Activated naive CD4-positive, alpha-beta T cell treated with anti-CD3 and anti-CD28 coated beads for 36 hours (primary cell): ENCODE measurements at regions of chr3 and their contacts with region 1.

Region 1: DNA sequence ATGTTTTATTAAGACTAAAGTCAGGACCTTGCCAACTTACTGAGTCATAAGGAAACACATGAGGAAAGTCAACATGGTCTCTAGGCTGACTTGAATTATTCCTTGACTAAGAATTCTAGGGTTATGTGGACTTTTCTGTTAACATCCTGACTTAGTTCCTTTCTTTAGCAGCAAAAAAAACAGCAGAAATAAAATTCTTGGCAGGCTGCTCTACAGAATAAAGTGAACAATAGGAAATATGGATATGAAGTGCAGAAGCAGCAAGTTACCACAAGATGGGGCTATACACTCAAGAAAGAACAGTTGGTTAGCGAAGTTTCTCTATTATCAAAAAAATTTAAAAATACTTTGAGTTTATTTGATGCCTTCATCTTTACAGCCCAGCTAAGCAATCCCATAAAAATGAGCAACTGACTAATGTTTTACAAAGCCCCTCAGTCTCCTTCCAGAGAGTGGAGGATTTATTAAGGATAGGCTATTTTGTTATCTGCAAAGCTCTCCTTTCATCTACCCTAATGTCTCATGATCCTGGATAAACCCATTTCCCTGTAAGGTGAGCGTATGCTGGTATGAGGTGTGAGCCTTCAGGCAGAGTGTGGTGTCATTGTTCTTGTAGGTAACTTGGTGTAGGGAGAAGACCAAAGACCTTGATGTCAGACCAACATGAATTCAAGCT is 23.1 kb upstream of the MCCC1 start:
- DNase-seq: no peak
- H3K4me3 Mint-ChIP-seq: no peak overlapping the region
- H3K27ac Mint-ChIP-seq: no peak overlapping the region
- H3K4me1 Mint-ChIP-seq: peaks cover 5% of the 10 kb centered on the region
- H3K27me3 Mint-ChIP-seq: peaks cover 4% of the 10 kb centered on the region

Region 2: DNA sequence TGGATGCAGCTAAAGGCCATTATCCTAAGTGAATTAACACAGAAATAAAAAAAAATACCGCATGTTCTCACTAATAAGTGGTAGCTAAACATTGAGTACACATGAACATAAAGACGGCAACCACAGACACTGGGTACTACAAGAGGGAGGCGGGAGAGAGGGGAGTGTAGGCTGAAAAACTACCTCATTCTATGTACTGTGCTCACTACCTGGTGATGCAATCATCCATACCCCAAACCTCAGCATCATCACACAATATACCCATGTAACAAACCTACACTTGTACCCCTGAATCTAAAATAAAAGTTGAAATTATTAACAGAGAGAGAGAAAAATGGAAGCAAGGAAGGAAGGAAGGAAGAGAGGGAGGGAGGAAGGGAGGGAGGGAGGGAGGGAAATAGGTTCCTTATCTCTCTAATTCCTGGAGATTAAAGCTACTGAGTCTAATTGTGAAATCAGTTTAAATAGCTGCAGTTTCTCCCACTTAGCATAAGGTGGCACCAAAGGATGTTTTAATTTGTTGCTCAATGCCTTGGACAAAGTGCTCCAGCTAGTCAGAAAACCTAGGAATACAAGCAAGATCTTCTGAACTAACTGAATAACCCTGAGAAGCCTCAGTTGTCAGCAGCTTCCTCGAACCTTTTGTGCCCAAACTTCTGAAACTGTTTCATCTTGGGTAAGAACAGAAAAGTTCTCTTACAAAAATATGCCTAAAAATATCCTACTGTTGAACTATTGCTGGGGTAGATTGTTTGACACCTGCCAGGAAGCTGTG is 408.5 kb before region 1 on chr3:
- CTCF ChIA-PET with region 1: interaction called, 3 read pairs
- intact Hi-C with region 1: loop called (anchors 1 kb)
- DNase-seq: no peak
- H3K4me3 Mint-ChIP-seq: no peak overlapping the region
- H3K27ac Mint-ChIP-seq: no peak overlapping the region
- H3K4me1 Mint-ChIP-seq: peaks cover 8% of the 10 kb centered on the region
- H3K27me3 Mint-ChIP-seq: no peaks in the 10 kb centered on the region

Region 3: GRCh38 chr3:183178629-183179549 is 56.5 kb after region 1 on chr3:
- CTCF ChIA-PET with region 1: interaction called, 86 read pairs
- intact Hi-C with region 1: loop called (anchors 1 kb)
- DNase-seq: peak; percentile 84
- H3K4me3 Mint-ChIP-seq: peak overlapping the region; percentile 76
- H3K27ac Mint-ChIP-seq: no peak overlapping the region
- H3K4me1 Mint-ChIP-seq: peaks cover 11% of the 10 kb centered on the region
- H3K27me3 Mint-ChIP-seq: peaks cover 30% of the 10 kb centered on the region

Region 4: DNA sequence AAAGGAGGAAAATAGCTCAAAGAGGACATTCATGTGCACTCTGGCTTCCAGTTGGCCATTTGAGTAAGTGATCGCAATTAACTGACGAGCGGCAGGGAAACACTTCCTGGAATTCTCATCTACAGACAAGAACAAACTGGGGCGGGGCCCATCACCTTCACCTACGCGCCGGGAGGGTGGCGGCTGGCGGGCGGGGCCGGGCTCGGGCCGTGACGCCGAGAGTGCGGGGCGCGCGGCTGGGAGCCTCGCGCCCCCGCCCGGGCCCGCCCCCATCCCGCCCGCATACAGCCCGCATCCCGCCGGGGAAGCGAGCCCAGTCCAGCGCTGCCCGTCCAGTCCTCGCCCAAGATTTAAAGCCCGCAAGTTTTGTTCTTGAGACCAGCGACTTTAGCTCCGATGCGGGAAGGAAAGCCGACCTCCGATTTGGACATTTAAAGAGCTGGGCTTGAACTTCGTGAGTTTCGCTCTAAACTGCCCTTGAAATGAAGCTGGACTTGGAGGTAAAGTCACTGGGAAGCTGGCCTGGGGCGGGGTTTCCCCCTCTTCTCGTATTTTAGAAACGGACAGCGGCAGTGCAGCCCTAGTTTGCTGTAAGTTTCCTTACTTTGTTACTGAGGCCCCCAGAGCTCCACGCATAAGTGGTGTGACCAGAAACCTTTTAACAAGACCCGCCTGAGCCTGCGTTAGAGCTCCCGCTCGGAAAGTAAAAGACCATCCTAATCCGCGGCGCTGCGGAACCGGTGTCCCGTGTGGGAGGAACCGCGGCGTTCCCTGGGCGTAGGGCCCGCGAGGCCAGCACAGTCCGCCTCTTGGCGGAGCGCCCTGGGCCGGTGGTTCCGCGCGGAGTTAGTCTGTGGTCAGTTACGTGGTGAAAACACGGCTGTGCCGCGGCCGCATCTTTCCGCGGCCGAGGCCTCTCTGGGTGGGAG is 130.8 kb after region 1 on chr3 and contains the start of gene B3GNT5:
- CTCF ChIA-PET with region 1: interaction called, 4 read pairs
- intact Hi-C with region 1: loop called (anchors 1 kb)
- DNase-seq: peak; percentile 67
- H3K4me3 Mint-ChIP-seq: peak within 1 kb of the TSS; percentile 76
- H3K27ac Mint-ChIP-seq: peak within 1 kb of the TSS; percentile 75
- H3K4me1 Mint-ChIP-seq: peaks cover 29% of the 10 kb centered on the region
- H3K27me3 Mint-ChIP-seq: peaks cover 2% of the 10 kb centered on the region
- total RNA-seq, gene B3GNT5: 15.0 to 18.8 TPM

Region 5: DNA sequence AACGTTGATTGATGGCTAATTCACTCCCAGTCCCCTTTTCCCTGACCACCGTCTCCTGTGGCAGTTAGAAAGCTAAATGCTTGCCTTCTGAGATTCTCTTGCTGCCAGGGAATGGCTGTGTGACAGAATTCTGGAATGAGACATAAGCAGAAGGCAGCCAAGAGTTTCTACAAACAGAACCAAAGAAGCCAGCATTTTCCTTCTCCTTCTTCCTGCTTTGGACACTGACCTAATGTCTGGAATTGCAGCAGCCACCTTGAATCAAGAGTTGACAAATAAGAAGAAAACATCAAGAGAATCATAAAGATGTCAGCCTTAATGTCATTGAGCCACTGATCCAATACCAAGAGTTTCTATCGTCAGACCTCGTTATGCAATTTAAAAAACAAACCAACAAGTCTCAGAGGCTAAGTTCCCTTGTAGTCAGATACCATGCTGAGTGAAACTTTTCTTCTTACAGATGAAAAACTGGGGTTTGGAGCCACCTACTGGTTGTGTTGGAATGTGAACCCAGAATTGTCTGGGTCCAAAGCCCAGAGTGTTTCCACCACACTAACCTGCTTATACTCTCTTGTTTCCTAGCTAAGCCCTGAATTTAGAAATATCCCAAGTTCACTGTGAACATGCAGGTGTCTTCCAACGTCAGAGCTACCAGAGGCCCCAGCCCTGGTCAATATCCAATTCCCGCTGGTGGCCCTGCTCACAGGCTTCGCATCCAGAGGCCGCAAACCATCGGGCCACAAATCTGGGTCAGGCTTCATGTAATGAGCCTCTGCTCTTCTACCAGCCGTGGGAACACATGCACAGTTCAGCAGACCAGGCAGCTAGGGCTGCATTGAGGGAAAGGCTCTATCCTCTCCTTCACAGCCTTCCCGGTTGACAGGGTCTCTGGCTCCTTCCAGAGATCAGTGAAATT is 263.6 kb after region 1 on chr3:
- CTCF ChIA-PET with region 1: interaction called, 89 read pairs
- intact Hi-C with region 1: loop called (anchors 1 kb)
- DNase-seq: peak; percentile 79
- H3K4me3 Mint-ChIP-seq: no peak overlapping the region
- H3K27ac Mint-ChIP-seq: no peak overlapping the region
- H3K4me1 Mint-ChIP-seq: peaks cover 9% of the 10 kb centered on the region
- H3K27me3 Mint-ChIP-seq: no peaks in the 10 kb centered on the region

Region 6: GRCh38 chr3:183884427-183885296 is 762.3 kb after region 1 on chr3 and contains the start of gene PARL:
- CTCF ChIA-PET with region 1: no interaction called
- intact Hi-C with region 1: loop called (anchors 2 kb)
- DNase-seq: peak; percentile 98
- H3K4me3 Mint-ChIP-seq: peak within 1 kb of the TSS; percentile 94
- H3K27ac Mint-ChIP-seq: peak within 1 kb of the TSS; percentile 88
- H3K4me1 Mint-ChIP-seq: peaks cover 31% of the 10 kb centered on the region
- H3K27me3 Mint-ChIP-seq: no peaks in the 10 kb centered on the region
- total RNA-seq, gene PARL: 92.0 to 92.8 TPM